Sciatic nerve (tissue), 2 donors: ENCODE measurements at regions of chr3 and their contacts with region 1.

Region 1: DNA sequence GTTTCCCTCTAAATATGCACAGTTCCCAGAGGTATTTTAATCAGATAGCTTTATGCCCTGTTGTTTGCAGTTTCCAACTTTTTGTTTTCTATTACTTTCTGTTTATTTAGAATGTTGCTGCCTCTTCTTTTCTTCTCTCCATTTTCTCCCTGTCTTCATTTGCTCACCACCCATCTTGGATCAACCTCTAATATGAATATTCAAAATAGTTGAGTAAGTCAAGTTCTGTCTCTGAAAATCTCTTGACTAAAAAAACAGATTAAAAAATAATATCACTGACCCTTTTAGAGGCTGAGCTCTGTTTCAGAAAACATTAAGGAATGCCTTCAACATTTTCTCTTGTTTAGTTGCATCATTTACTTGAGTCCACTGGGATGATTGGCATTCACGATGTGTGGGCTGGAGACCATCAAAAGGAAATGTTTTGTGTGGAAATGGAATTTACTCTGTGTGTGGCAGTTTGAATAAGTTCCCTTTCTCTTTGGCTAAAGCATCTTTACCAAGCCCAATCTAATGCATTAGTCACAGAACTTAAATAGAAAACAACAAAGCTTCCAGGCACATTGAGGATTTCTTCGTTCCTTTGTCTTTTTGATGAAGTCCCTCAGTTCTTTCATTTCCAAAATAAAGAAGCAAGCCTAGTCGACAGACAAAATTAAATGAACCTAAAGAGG is 633.9 kb upstream of the TGFBR2 start:
- DNase-seq: no peak
- ATAC-seq: peak; percentile 85

Region 2: GRCh38 chr3:28856796-28857195 is 1115.7 kb before region 1 on chr3:
- intact Hi-C with region 1: loop called (anchors 5 kb)
- DNase-seq: no peak
- ATAC-seq: no peak